ENCODE measurements at regions of chrX and their contacts with region 1.

Region 1: DNA sequence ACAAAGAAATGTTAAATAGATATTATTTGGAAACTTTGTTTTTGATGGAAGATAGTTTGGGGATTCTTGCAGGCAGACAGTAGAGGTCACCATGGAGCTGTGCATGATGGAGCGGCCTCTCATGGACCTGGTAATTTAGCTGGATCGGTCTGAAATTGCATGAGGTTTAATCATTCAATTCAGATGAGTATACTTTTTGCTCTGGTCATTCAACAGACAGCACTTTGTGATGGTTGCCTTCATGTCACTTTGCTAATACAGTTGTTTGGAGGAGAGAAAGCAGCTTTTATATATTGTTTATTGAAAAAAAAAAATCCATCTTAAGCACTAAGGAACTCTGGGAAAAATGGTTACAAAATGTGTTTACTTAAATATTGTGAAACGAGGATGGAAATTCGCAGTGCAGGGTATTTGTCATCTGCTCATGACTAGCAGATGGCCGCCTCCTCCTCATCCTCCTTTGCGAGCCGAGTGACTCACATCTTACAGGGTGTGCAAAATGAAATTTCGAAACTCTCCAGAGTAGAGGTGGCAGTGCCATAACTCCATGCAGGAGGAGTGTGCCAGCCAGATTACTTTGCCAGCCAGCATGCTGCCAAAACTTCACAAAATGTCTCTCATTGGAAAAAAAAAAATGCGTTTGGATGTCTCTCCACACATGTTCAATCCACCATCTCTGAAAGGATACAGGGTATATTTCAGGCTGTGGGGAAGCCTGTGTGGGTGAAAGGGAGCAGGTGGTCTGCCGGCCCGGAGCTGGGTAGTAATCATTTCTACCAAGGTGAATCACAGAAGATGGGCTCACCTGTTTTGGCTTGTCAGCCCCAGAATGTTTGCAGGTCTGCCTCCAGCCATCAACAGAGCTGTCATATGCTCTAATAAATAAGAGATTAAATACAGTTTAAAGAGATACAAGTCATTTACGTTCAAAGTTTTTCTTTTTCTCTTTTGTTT is 314.9 kb upstream of the DIPK2B start:
- DNase-seq: peak; percentile 53
- H3K4me3 Mint-ChIP-seq: no peak overlapping the region
- H3K27ac Mint-ChIP-seq: peak overlapping the region; percentile 49
- H3K4me1 Mint-ChIP-seq: peaks cover 17% of the 10 kb centered on the region
- H3K27me3 Mint-ChIP-seq: peaks cover 3% of the 10 kb centered on the region

Region 2: DNA sequence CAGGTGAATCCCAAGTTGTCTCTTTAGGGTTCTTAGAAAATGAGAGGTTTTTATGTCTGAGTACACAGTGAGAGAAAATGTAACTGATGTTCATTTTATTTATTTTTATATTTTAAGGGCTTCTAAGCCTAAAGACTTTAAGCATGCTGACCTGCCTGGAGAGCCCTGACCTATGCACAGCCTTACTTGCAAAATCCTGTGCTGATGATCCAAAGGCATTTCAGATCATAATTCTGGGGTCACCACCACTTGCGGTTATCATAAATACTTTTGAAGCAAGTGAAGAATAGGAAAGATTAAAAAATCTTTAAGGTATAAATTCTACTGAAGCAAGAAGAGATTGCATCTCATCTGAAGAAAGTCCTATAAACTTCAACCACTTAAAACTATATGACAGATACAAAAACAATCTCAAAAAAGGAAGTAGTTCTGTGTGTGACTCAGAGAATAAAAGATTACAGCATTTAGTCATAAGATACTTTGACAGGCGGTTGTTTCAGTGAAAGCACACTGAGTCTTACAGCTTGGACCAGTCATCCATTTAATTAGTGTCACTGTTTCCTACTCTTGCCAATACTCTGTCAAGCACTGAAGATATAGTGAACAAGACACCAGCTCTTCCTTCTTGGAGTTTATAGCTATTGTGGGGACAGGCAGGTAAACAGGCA is 69.7 kb before region 1 on chrX:
- CTCF ChIA-PET with region 1: no interaction called
- POLR2A ChIA-PET with region 1: interaction called, 8 read pairs
- intact Hi-C with region 1: loop called (anchors 2 kb)
- DNase-seq: no peak
- H3K4me3 Mint-ChIP-seq: no peak overlapping the region
- H3K27ac Mint-ChIP-seq: peak overlapping the region; percentile 33
- H3K4me1 Mint-ChIP-seq: peaks cover 9% of the 10 kb centered on the region
- H3K27me3 Mint-ChIP-seq: no peaks in the 10 kb centered on the region

Region 3: DNA sequence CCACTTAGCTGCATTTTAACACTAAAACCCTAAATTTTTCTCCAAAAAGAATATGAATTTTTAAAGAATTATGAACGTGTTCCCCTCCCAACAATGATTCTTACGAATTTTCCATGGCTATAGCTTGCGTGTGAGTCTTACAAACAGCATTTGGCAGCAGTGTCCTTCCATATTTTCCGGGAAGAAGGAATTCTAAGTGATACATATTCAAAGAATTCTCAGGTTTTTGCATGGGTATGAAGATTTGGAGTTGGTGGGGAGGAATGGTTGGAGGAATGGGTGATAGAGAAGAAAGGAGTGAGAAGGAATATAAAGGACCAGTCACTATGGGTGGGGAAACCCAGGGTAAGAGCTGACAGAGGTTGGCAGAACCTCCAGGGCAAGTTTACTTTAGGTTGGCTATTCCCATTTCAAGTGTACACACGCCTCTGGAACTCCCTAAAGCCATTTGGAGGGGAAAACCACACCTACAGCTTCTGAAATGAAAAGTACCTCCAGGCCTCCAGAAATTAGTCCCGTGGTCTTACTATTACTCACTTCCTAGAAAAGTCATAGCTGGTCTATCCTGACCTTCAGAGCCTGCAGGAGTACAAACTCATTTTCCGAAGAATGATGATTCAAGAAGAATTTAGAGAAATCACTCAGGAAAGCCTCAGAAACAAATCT is 106.0 kb after region 1 on chrX:
- CTCF ChIA-PET with region 1: interaction called, 3 read pairs
- POLR2A ChIA-PET with region 1: no interaction called
- intact Hi-C with region 1: loop called (anchors 5 kb)
- DNase-seq: peak; percentile 31
- H3K4me3 Mint-ChIP-seq: no peak overlapping the region
- H3K27ac Mint-ChIP-seq: peak overlapping the region; percentile 83
- H3K4me1 Mint-ChIP-seq: peaks cover 23% of the 10 kb centered on the region
- H3K27me3 Mint-ChIP-seq: peaks cover 2% of the 10 kb centered on the region

Region 4: DNA sequence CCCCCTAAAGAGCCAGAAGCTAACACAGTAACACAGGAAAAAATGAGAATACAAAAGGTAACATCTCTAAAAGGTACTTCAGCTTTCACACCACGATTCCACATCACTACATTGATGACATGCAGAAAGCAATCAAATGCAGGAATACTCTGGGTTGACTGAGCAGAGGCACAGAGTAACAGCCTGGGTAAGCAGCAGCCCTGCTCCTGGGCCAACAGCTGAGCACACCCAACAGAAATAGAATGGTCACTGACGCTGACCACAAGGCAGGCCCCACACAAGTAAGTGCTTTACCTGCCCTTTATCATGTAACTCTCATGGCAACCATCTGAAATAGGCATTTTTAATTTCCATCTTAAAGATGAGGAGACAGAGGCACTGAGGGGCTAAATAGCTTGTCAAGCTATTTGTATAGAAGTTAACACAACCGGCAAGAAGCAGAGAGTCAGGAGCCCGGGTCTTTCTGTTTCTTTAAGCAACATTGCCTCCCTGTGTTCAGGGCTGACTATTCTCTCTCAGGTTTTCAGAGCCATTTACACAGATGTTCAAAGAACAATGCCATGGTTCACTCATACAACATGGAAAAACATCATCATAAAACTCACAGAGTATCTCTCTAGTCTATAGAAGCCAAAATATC is 860.8 kb after region 1 on chrX:
- CTCF ChIA-PET with region 1: interaction called, 4 read pairs
- POLR2A ChIA-PET with region 1: no interaction called
- intact Hi-C with region 1: loop called (anchors 1 kb)
- DNase-seq: peak; percentile 47
- H3K4me3 Mint-ChIP-seq: no peak overlapping the region
- H3K27ac Mint-ChIP-seq: no peak overlapping the region
- H3K4me1 Mint-ChIP-seq: peaks cover 13% of the 10 kb centered on the region
- H3K27me3 Mint-ChIP-seq: no peaks in the 10 kb centered on the region

Measured in activated CD4-positive, alpha-beta memory T cell treated with anti-CD3 and anti-CD28 coated beads for 36 hours (primary cell).